ENCODE measurements at regions of chr2 and their contacts with region 1.

Region 1: DNA sequence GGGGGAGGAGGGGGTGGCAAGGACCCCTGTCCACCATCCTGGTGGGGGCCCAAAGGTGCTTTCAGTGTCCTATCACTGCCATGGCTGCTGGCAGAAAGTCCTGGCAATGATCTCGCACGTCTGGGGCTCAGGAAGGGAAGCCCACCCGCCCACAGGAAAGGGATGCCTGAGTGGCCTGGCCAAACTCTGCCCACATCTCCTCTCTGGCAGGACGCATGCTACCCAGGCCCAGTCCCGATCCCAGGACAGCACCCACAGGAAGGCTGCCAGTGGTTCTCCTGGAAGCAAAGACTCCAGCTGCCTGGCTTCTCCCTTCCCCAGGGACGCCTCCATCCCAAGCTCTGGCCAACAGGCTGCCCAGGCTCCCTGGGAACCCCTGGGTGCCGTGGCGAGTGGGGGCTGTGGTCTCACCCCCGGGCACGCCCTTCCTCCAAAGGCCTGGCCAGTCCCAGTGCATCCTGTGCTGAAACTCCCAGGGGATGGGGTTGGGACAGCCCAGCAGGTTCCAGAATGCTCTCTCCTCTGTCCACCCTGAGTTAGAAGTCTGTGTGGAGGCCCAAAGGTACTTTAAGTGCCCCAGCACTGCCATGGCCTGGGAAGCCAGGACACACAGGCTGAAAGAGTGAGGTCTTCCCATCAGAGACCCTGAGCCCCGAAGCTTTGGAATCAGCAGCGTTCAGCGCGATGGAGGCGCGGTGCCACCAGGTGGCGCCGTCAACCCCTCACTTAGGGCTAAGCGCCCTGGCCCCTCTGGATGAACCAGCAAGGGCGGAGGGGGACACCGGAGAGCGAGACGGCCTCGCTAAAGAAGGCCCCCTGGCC is 29.8 kb upstream of the TAF1B start:
- DNase-seq: peak; percentile 89
- CTCF ChIP-seq: peak; percentile 94

Region 2: DNA sequence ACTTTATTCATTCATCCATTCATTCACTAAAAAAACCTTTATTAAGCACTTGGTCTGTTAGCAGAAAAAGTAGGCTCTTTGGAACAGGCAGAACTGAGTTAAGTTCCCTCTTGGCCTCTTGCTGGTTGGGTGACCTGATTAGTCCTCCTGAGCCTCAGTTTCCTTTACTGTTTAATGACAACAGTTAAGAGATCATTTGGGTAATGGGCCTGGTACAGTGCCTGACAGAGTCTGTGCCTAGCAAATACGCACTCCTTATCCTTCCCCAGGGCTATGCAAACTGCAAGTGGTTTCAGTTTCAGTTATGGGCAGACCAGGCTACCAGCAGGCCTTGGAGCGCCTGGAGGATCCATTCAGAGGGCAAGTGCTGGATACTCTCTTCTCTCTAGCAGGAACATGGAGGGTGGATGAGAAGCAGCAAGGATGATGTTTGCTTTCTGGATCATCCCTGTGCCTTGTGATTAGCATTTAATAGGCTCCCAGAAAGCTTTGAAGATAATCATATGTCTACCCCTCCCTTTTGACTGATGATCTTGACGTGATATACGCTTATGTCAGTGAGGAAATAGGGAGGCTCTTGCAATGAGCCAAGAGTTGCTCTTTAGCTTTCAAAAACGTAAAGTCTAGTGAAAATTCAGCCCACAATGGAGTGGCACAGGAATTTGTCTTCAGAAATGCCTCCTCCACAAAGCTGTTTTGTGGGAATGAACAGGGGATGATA is 17.3 kb after region 1 on chr2:
- CTCF ChIA-PET with region 1: interaction called, 21 read pairs
- POLR2A ChIA-PET with region 1: no interaction called
- DNase-seq: no peak
- CTCF ChIP-seq: no peak

Region 3: DNA sequence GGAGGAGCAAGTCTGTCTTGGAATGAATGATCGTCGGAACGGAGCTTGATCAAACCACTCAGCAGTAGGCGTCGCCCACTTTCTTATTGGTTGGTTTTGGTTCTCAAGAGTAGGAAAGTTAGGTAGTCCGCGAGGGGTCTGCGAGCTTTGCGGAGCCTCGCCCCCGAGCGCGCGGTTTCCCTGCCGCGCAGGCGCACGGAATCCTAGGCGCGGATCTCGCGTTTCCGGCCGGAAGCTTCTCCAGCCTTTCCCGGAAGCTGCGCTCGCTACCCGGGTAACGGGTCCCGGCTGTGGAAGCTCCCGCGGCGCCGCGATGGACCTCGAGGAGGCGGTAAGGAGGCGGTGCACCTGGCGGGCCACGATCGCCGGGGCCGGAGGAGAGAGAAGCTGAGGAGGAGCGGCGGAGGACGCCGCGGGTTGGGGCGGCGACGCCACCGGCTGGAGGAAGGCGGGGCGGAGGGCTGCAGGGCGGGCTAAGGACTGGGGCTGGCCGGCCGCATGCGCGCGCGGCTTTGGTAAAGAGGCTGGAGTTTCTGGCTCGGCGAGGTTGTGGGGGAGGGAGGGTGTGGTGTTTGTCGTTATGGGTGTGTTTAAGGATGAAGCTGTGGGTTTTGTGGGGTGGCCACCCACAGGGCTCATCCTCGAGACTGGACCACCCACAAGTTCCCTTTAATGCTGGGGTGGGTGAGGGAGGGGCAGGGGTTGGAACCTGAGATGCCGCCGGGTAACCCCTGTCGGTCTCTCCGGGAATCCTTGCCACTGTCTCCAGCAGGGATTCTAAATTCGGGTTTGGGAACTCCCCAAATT is 29.9 kb after region 1 on chr2 and contains the start of gene TAF1B:
- CTCF ChIA-PET with region 1: interaction called, 39 read pairs
- POLR2A ChIA-PET with region 1: no interaction called
- DNase-seq: peak; percentile 94
- CTCF ChIP-seq: no peak

Region 4: GRCh38 chr2:10019602-10020400 is 206.3 kb after region 1 on chr2:
- CTCF ChIA-PET with region 1: interaction called, 13 read pairs
- POLR2A ChIA-PET with region 1: no interaction called
- DNase-seq: no peak
- CTCF ChIP-seq: no peak

Region 5: DNA sequence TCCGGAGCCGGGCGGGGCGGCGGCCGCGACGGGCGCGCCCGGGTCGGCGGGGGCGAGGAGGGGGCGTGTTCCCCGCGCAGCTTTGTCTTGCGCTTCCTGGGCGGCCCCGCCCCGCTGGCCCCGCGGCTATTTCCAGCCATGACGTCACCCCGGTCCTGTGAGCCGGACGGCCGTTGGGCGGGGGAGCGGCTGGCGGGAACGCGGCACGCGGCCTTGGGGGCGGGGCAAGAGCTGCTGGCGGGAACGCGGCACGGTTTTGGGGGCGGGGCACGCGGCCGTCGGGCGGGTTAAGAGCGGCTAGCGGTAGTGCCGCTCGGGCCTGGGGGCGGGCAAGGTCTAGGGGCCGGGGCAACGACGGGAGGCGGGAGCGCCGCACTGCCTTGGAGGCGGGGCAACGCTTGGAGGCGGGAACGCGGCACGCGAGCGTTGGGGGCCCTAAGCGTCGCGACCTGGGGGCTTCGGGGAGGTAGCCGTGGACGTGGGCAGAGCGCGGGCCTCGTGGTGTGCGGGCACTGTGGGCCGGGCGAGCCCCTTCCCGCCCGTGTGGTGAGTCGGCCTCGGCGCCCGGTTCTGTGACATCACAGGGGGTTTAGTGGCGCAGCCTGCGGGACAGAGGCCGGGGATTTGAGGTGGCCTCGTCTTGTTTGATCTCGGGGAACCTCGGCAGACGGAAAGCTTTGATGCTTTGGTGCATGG is 230.5 kb after region 1 on chr2:
- CTCF ChIA-PET with region 1: interaction called, 93 read pairs
- POLR2A ChIA-PET with region 1: no interaction called
- DNase-seq: peak; percentile 93
- CTCF ChIP-seq: no peak

Region 6: GRCh38 chr2:10267551-10268465 is 454.3 kb after region 1 on chr2:
- CTCF ChIA-PET with region 1: no interaction called
- POLR2A ChIA-PET with region 1: no interaction called
- DNase-seq: no peak
- CTCF ChIP-seq: no peak

Measured in GM10248 (cell line).